Common myeloid progenitor, CD34-positive (primary cell): ENCODE measurements at regions of chr7 and their contacts with region 1.

Region 1: DNA sequence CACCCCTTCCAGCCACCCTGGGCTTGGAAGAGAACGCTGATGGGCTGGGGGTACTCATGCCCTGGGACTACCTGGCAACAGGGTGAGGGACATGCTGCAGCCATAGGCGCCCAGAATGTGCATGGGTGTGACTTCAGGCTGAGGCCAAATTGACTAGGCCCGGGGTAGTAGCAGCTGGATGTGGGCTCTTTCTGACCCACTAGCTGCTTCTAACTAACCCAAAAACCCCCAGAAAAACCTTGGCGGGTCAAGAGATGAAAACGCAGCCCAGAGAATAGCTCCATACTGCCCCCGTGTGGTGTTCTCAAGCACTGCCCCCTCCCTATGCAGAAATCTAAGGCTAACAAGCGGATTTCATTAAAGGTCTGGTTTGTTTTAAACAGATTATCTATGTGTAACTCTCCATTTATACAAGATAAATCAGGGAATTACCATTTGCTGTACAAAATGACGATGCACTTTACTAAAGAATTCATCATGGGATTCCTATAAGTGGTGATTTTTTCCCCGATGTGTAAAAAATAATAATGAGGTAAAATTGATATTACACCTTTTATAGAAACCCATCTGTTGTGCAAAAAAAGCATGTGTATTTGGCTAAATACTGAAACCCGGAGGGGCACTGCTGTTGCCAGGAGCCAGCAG is 4.2 kb downstream of the SMARCD3 start:
- DNase-seq: peak; percentile 72 to 85 (median 77)
- H3K4me3 ChIP-seq: peak overlapping the region in 2 of 7 experiments; percentile 51 to 56
- H3K27ac ChIP-seq: no peak overlapping the region
- H3K4me1 ChIP-seq: peaks cover 5 to 53% (median 50%) of the 10 kb centered on the region in 4 experiments
- H3K27me3 ChIP-seq: peaks cover 0 to 46% (median 20%) of the 10 kb centered on the region in 5 experiments

Region 2: GRCh38 chr7:151123822-151124464 is 120.4 kb before region 1 on chr7:
- CTCF ChIA-PET with region 1: interaction called, 15 read pairs
- POLR2A ChIA-PET with region 1: no interaction called
- DNase-seq: peak; percentile 77 to 87 (median 83)
- H3K4me3 ChIP-seq: no peak overlapping the region
- H3K27ac ChIP-seq: no peak overlapping the region
- H3K4me1 ChIP-seq: no peaks in the 10 kb centered on the region
- H3K27me3 ChIP-seq: no peaks in the 10 kb centered on the region

Region 3: GRCh38 chr7:151206914-151207313 is 37.4 kb before region 1 on chr7:
- CTCF ChIA-PET with region 1: interaction called, 37 read pairs
- POLR2A ChIA-PET with region 1: no interaction called
- DNase-seq: peak; percentile 88 to 98 (median 95)
- H3K4me3 ChIP-seq: peak overlapping the region in 1 of 7 experiments; percentile 65
- H3K27ac ChIP-seq: no peak overlapping the region
- H3K4me1 ChIP-seq: peaks cover 8 to 35% (median 27%) of the 10 kb centered on the region in 4 experiments
- H3K27me3 ChIP-seq: peaks cover 0 to 25% (median 4%) of the 10 kb centered on the region in 5 experiments

Region 4: GRCh38 chr7:151226875-151227782 is 17.2 kb before region 1 on chr7 and contains the start of gene ABCF2:
- CTCF ChIA-PET with region 1: interaction called, 72 read pairs
- POLR2A ChIA-PET with region 1: interaction called, 15 read pairs
- DNase-seq: peak; percentile 98 to 99 (median 98)
- H3K4me3 ChIP-seq: peak within 1 kb of the TSS; percentile 59 to 98 (median 91)
- H3K27ac ChIP-seq: peak within 1 kb of the TSS; percentile 42 to 79
- H3K4me1 ChIP-seq: peaks cover 15 to 31% (median 21%) of the 10 kb centered on the region in 4 experiments
- H3K27me3 ChIP-seq: no peaks in the 10 kb centered on the region

Region 5: GRCh38 chr7:151256410-151257045 is 12.2 kb after region 1 on chr7:
- CTCF ChIA-PET with region 1: interaction called, 15 read pairs
- POLR2A ChIA-PET with region 1: no interaction called
- DNase-seq: no peak
- H3K4me3 ChIP-seq: no peak overlapping the region
- H3K27ac ChIP-seq: no peak overlapping the region
- H3K4me1 ChIP-seq: peaks cover 0 to 7% (median 5%) of the 10 kb centered on the region in 4 experiments
- H3K27me3 ChIP-seq: peaks cover 0 to 40% (median 26%) of the 10 kb centered on the region in 5 experiments

Region 6: DNA sequence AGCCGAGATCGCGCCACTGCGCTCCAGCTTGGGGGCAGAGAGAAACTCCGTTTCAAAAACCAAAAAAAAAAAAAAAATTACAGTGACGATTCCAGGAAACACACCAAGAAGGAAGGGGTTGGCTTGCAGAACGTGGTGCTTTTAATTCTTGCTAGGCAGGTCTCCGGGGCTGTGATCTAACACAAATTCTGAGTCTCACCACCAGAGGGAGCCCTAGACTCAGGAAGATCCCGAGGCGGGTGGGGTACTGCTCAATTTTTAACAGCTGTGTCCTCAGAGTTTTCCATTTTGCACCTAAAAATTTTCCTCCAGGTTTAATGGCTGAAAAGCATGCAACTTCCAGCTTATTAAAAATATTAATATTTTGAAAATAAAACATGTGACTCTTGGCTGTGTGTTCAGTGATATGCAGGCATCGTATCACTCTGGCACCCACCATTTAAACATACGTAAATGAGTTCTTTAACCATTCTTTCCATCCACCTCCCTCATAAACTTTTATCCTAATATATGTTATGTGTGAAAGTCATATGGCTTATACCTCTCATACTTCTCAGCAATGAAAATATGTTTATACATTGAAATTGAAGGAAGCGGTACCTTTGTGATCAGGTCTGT is 70.8 kb after region 1 on chr7:
- CTCF ChIA-PET with region 1: interaction called, 31 read pairs
- POLR2A ChIA-PET with region 1: no interaction called
- DNase-seq: peak; percentile 84 to 93 (median 89)
- H3K4me3 ChIP-seq: peak overlapping the region in 3 of 7 experiments; percentile 45 to 56 (median 48)
- H3K27ac ChIP-seq: no peak overlapping the region
- H3K4me1 ChIP-seq: peaks cover 0 to 25% (median 9%) of the 10 kb centered on the region in 4 experiments
- H3K27me3 ChIP-seq: peaks cover 0 to 1% (median 0%) of the 10 kb centered on the region in 5 experiments

Region 7: GRCh38 chr7:151432791-151433521 is 188.6 kb after region 1 on chr7:
- CTCF ChIA-PET with region 1: no interaction called
- POLR2A ChIA-PET with region 1: no interaction called
- DNase-seq: peak in 2 of 3 donors; percentile 44 to 54
- H3K4me3 ChIP-seq: no peak overlapping the region
- H3K27ac ChIP-seq: no peak overlapping the region
- H3K4me1 ChIP-seq: peaks cover 0 to 37% (median 23%) of the 10 kb centered on the region in 4 experiments
- H3K27me3 ChIP-seq: peaks cover 0 to 16% (median 2%) of the 10 kb centered on the region in 5 experiments

Region 8: DNA sequence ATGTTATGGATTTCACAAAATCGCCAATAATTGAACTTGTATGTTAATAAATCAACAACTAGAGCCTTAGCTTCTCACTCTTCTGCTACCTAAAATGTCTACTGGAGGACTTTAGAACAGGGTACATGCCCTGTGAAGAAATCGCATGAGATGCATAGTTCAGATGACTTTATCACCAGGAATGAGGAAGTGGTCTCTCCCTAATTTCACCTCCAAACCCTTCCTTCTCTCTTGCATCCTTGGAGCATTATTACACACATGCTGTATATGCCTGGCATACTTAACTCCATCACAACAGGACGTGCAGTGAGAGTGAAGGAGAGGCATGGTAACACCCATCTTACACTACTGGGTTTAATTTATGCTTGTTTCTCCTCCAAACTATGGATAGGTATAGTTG is 247.5 kb after region 1 on chr7:
- CTCF ChIA-PET with region 1: no interaction called
- POLR2A ChIA-PET with region 1: no interaction called
- DNase-seq: peak in 2 of 3 donors; percentile 11
- H3K4me3 ChIP-seq: no peak overlapping the region
- H3K27ac ChIP-seq: no peak overlapping the region
- H3K4me1 ChIP-seq: peaks cover 0 to 1% (median 0%) of the 10 kb centered on the region in 4 experiments
- H3K27me3 ChIP-seq: no peaks in the 10 kb centered on the region

Region 9: DNA sequence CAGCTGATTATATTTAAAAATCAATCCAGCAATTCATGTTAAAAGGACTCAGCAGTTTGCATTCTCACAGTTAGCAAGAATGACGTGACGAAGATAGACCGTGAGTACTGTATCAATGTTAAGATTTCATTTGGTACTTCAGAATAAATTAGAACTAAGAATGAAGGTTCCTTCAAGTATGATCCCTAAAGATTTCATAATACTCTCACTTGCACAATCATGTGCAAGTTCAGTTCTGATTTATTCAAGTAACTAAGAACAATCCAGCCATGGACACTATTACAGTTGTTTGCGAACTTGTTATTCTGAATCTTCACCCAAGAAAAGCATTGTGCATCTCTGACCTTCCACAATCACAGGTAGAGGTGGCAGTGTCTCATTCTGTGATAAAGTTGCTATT is 267.6 kb after region 1 on chr7:
- CTCF ChIA-PET with region 1: no interaction called
- POLR2A ChIA-PET with region 1: no interaction called
- DNase-seq: no peak
- H3K4me3 ChIP-seq: no peak overlapping the region
- H3K27ac ChIP-seq: no peak overlapping the region
- H3K4me1 ChIP-seq: peaks cover 0 to 16% (median 9%) of the 10 kb centered on the region in 4 experiments
- H3K27me3 ChIP-seq: no peaks in the 10 kb centered on the region